Heart left ventricle (tissue), 16 donors: ENCODE measurements at regions of chr3 and their contacts with region 1.

Region 1: DNA sequence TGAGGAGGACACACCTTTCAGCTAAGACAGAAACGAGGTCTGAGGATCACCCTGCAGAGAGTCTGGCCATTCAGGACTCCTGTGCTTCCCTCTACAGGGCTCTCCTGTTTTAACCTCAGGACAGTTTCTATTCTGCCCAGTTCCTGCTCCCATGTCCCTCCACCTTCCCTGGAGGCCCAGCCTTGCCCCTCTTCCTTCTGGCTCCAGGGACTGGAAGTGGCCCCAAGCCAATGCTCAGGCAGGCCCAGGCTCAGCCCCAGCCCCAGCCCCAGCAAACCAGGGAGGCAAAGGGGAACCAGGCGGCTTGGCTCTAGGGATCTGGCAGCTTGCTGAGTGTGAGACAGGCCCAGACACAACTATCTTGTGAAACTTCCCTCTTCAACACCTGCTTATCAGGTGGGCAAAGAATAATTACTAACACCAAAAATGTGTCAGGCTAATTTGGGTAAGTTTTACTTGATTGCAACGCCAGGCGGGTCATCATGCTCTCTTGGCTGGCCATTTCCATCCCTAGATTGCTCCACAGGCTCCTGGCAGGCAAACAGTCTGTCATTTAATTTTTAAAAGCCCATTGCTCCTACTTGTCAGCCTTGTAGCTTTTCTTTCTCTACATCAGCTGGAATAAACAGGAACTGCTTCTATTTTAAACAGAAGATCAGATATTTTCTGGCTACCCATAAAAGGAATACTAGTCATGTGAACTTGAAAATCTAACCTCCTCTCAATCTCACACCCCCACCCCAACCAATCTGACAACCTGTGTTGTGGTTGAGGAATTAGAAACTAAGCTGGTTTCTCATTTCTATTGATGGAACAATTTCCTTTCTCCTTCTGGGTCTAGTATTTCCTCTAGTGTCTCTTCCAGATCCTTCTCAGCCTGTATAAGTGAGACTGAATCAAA is 33.5 kb downstream of the UPK1B start:
- DNase-seq: peak in 1 of 5 donors; percentile 29
- ATAC-seq: peak; percentile 49 to 76 (median 70)
- H3K4me3 ChIP-seq: no peak overlapping the region
- H3K27ac ChIP-seq: no peak overlapping the region
- H3K4me1 ChIP-seq: peaks cover 0 to 22% (median 4%) of the 10 kb centered on the region in 12 donors
- H3K27me3 ChIP-seq: no peaks in the 10 kb centered on the region
- CTCF ChIP-seq: no peak
- POLR2A ChIP-seq: no peak

Region 2: DNA sequence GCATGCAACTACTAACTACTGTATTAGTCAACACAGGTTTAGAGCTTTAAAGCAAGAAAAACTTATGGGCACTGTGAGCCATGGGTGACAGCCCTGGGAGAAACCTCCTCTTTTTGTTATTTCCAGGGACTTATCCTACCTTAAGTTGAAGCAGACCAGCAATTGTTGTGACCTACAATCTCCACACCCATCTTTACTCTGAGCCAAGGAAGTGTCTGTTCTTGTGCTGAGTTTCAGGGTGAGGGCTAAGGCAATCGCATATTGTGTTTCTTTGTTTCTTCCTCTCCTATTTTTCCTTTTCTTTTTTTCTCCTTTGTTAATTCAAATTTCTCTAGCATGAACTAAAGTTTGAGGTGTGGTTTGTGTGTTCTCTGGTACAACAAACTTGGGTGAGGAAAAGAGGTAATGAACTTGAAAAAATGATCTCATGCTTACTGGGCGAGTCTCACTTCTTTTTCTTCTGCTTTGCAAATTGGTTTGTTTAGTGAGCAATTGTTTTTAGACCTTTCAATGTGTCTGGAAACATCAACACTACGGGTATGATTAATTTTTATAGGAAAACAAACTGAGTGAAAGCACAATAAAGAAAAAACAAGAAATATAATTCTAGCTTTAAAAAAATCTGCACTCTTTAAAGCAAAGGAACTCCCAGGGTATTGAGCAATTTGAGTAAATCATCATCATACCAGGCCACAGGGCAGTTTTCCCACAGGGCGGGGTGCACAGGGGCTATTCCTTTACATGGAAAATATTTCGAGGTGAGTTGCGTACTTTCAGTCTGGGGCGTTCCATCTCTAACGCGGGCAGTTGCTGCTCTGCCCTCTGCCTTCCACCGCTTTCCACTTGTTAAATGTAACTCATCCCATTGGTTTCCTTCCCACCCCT is 30.7 kb before region 1 on chr3:
- intact Hi-C with region 1: no loop called
- DNase-seq: no peak
- ATAC-seq: peak in 1 of 4 donors; percentile 61
- H3K4me3 ChIP-seq: no peak overlapping the region
- H3K27ac ChIP-seq: no peak overlapping the region
- H3K4me1 ChIP-seq: no peaks in the 10 kb centered on the region
- H3K27me3 ChIP-seq: peaks cover 0 to 3% (median 0%) of the 10 kb centered on the region in 9 donors
- CTCF ChIP-seq: no peak
- POLR2A ChIP-seq: no peak

Region 3: GRCh38 chr3:119620899-119621298 is 414.0 kb after region 1 on chr3:
- intact Hi-C with region 1: loop called in 1 of 10 experiments (anchors 5 kb)
- DNase-seq: no peak
- ATAC-seq: no peak
- H3K4me3 ChIP-seq: no peak overlapping the region
- H3K27ac ChIP-seq: no peak overlapping the region
- H3K4me1 ChIP-seq: peaks cover 0 to 8% (median 0%) of the 10 kb centered on the region in 12 donors
- H3K27me3 ChIP-seq: no peaks in the 10 kb centered on the region
- CTCF ChIP-seq: no peak
- POLR2A ChIP-seq: no peak